ENCODE measurements at regions of chr19 and their contacts with region 1.

Region 1: DNA sequence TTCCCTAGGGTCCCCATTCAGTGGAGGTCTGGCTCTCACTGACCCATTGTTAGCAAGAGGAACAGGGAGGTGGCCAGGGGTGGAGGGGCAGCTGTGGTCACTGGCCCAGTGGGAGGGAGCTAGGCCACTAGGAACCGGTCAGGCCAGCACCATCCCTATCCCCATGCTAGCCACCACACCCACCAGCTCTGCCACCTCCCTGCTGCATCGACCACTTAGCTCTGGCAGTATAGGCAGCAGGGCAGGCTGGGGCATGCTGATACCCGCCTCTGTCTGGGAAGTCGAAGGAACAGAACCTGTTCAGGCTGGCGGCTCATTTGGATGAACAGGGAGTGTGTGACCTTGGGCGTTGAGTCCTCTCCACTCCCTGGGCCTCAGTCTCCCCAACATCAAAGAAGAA is 4.7 kb downstream of the PPP1R13L start:
- DNase-seq: peak; percentile 94
- H3K4me3 ChIP-seq: no peak overlapping the region
- H3K27ac ChIP-seq: no peak overlapping the region
- H3K4me1 ChIP-seq: peaks cover 32% of the 10 kb centered on the region
- H3K27me3 ChIP-seq: no peaks in the 10 kb centered on the region
- CTCF ChIP-seq: no peak

Region 2: DNA sequence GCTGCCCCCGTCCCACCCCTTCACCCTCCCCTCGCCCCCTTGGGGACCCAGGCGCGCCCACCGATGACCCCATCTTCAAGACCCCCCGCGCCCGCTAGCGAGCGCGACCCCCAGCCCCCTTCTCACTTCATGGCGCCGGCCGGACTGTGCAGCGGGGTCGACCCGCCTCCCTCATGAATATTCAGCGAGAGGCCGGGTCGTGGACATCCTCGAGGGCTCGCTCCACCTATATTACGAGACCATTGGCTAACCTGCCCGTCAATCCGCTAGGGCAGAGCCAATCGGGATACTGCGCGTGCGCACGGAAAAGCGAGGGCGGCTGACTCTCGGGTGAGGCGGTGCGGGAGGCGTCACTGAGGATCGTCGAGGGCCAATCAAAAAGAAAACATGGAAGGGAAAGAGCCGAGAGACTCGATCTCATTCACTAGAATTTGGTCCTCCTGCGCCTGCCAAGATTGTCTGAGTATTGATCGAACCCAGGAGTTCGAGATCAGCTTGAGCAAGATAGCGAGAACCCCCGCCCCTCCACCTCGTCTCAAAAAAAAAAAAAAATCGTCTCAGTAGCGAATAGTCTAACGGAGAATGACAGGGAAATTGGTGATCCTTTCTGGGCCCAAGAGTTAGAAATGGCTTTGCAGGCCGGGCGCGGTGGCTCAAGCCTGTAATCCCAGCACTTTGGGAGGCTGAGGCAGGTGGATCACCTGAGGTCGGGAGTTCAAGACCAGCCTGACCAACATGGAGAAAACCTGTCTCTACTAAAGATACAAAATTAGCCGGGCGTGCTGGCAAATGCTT is 29.6 kb before region 1 on chr19 and contains the start of gene ERCC2:
- CTCF ChIA-PET with region 1: no interaction called
- dilution Hi-C with region 1: no loop called
- in situ Hi-C with region 1: no loop called
- intact Hi-C with region 1: loop called (anchors 2 kb)
- DNase-seq: peak; percentile 99
- H3K4me3 ChIP-seq: peak within 1 kb of the TSS; percentile 82 to 86 (median 85)
- H3K27ac ChIP-seq: peak within 1 kb of the TSS; percentile 74
- H3K4me1 ChIP-seq: peaks cover 3% of the 10 kb centered on the region
- H3K27me3 ChIP-seq: no peaks in the 10 kb centered on the region
- CTCF ChIP-seq: no peak
- total RNA-seq, gene ERCC2: 17.7 to 26.3 TPM

Measured in mammary epithelial cell (primary cell).